Naive thymus-derived CD4-positive, alpha-beta T cell (primary cell): ENCODE measurements at regions of chr14 and their contacts with region 1.

Region 1: DNA sequence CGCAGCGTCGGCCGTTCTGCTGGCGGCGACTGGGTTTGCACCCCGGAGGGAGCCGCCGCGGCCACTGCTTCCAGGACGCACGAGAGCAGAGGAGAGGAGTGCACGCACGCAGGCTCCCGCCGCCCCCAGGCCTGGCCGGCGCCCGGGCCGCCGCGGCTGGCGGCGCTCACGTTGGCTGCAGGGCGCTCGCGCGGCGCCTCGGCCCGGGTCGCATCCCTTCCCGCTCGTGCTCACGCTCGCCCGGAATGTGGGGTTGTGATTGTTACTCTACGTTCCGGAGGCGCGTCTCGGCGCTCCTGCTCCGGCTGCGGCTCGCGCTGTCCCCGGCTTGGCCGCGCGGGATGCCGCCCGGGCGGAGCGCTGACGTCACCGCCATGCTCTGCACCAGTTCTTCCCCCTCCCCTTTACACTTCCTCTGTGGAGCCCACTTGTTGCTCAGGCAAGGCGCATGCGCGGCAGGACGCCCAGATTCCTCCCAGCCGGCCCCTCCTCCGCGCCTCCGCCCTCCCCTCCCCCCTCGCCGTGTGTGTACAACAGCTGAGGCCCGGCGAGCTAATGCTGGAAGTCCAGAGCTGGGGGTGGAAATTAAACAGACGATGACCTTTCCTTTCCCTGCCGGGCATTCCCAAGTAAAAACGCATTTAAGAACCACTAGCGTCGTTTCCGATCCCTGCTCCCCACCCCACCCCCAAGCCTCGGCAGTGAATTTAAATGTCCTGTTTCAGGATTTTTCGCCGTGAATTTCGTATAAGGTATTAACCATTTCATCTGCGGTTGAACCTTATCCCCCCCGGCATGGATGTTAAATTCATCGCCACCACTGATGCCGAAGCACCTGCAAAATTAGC is at the start of gene IRF2BPL:
- DNase-seq: peak; percentile 90 to 96 (median 94)
- ATAC-seq: peak; percentile 82
- H3K4me3 ChIP-seq: peak within 1 kb of the TSS; percentile 81
- H3K4me3 Mint-ChIP-seq: peak within 1 kb of the TSS; percentile 93 to 99 (median 98)
- H3K27ac ChIP-seq: peak within 1 kb of the TSS; percentile 98
- H3K27ac Mint-ChIP-seq: peak within 1 kb of the TSS; percentile 97 to 100 (median 99)
- H3K4me1 ChIP-seq: peaks cover 43 to 57% of the 10 kb centered on the region in 2 donors
- H3K4me1 Mint-ChIP-seq: peaks cover 33 to 65% (median 58%) of the 10 kb centered on the region in 7 donors
- H3K27me3 ChIP-seq: no peaks in the 10 kb centered on the region
- H3K27me3 Mint-ChIP-seq: no peaks in the 10 kb centered on the region
- total RNA-seq, gene IRF2BPL: 30.2 to 45.2 (median 34.6) TPM

Region 2: GRCh38 chr14:76910371-76910890 is 118.2 kb before region 1 on chr14:
- CTCF ChIA-PET with region 1: interaction called, 12 read pairs
- POLR2A ChIA-PET with region 1: interaction called, 19 read pairs
- intact Hi-C with region 1: loop called in 1 of 2 experiments (anchors 1 kb)
- DNase-seq: no peak
- ATAC-seq: no peak
- H3K4me3 ChIP-seq: no peak overlapping the region
- H3K4me3 Mint-ChIP-seq: no peak overlapping the region
- H3K27ac ChIP-seq: no peak overlapping the region
- H3K27ac Mint-ChIP-seq: peak overlapping the region in 2 of 9 donors; percentile 32 to 58
- H3K4me1 ChIP-seq: peaks cover 7 to 22% of the 10 kb centered on the region in 2 donors
- H3K4me1 Mint-ChIP-seq: peaks cover 7 to 52% (median 20%) of the 10 kb centered on the region in 7 donors
- H3K27me3 ChIP-seq: no peaks in the 10 kb centered on the region
- H3K27me3 Mint-ChIP-seq: no peaks in the 10 kb centered on the region

Region 3: GRCh38 chr14:76926521-76927251 is 101.9 kb before region 1 on chr14:
- CTCF ChIA-PET with region 1: interaction called, 3 read pairs
- POLR2A ChIA-PET with region 1: interaction called, 8 read pairs
- intact Hi-C with region 1: loop called in 1 of 2 experiments (anchors 1 kb)
- DNase-seq: peak in 8 of 9 donors; percentile 50 to 90 (median 69)
- ATAC-seq: peak; percentile 73
- H3K4me3 ChIP-seq: peak overlapping the region; percentile 6
- H3K4me3 Mint-ChIP-seq: peak overlapping the region; percentile 65 to 88 (median 80)
- H3K27ac ChIP-seq: peak overlapping the region; percentile 65
- H3K27ac Mint-ChIP-seq: peak overlapping the region; percentile 56 to 96 (median 90)
- H3K4me1 ChIP-seq: peaks cover 52 to 72% of the 10 kb centered on the region in 2 donors
- H3K4me1 Mint-ChIP-seq: peaks cover 50 to 96% (median 86%) of the 10 kb centered on the region in 7 donors
- H3K27me3 ChIP-seq: no peaks in the 10 kb centered on the region
- H3K27me3 Mint-ChIP-seq: no peaks in the 10 kb centered on the region

Region 4: GRCh38 chr14:76956316-76957090 is 72.1 kb before region 1 on chr14:
- CTCF ChIA-PET with region 1: interaction called, 17 read pairs
- POLR2A ChIA-PET with region 1: interaction called, 73 read pairs
- intact Hi-C with region 1: loop called (anchors 1 kb)
- DNase-seq: peak; percentile 70 to 90 (median 78)
- ATAC-seq: peak; percentile 82
- H3K4me3 ChIP-seq: peak overlapping the region; percentile 74
- H3K4me3 Mint-ChIP-seq: peak overlapping the region; percentile 82 to 97 (median 93)
- H3K27ac ChIP-seq: peak overlapping the region; percentile 87
- H3K27ac Mint-ChIP-seq: peak overlapping the region; percentile 88 to 99 (median 98)
- H3K4me1 ChIP-seq: peaks cover 38 to 49% of the 10 kb centered on the region in 2 donors
- H3K4me1 Mint-ChIP-seq: peaks cover 24 to 77% (median 71%) of the 10 kb centered on the region in 7 donors
- H3K27me3 ChIP-seq: no peaks in the 10 kb centered on the region
- H3K27me3 Mint-ChIP-seq: no peaks in the 10 kb centered on the region

Region 5: GRCh38 chr14:76977793-76978720 is 50.6 kb before region 1 on chr14:
- CTCF ChIA-PET with region 1: no interaction called
- POLR2A ChIA-PET with region 1: no interaction called
- intact Hi-C with region 1: loop called in 1 of 2 experiments (anchors 1 kb)
- DNase-seq: peak; percentile 40 to 90 (median 65)
- ATAC-seq: peak; percentile 97
- H3K4me3 ChIP-seq: no peak overlapping the region
- H3K4me3 Mint-ChIP-seq: peak overlapping the region in 7 of 10 donors; percentile 1 to 57 (median 35)
- H3K27ac ChIP-seq: peak overlapping the region; percentile 50
- H3K27ac Mint-ChIP-seq: peak overlapping the region; percentile 29 to 88 (median 82)
- H3K4me1 ChIP-seq: peaks cover 12 to 15% of the 10 kb centered on the region in 2 donors
- H3K4me1 Mint-ChIP-seq: peaks cover 0 to 25% (median 16%) of the 10 kb centered on the region in 7 donors
- H3K27me3 ChIP-seq: no peaks in the 10 kb centered on the region
- H3K27me3 Mint-ChIP-seq: no peaks in the 10 kb centered on the region

Region 6: GRCh38 chr14:77040059-77040740 is 11.6 kb after region 1 on chr14:
- CTCF ChIA-PET with region 1: interaction called, 61 read pairs
- POLR2A ChIA-PET with region 1: interaction called, 240 read pairs
- intact Hi-C with region 1: loop called (anchors 1 kb)
- DNase-seq: peak; percentile 86 to 99 (median 99)
- ATAC-seq: peak; percentile 87
- H3K4me3 ChIP-seq: peak overlapping the region; percentile 78
- H3K4me3 Mint-ChIP-seq: peak overlapping the region; percentile 76 to 97 (median 87)
- H3K27ac ChIP-seq: peak overlapping the region; percentile 97
- H3K27ac Mint-ChIP-seq: peak overlapping the region; percentile 97 to 100 (median 99)
- H3K4me1 ChIP-seq: peaks cover 57 to 77% of the 10 kb centered on the region in 2 donors
- H3K4me1 Mint-ChIP-seq: peaks cover 50 to 97% (median 89%) of the 10 kb centered on the region in 7 donors
- H3K27me3 ChIP-seq: no peaks in the 10 kb centered on the region
- H3K27me3 Mint-ChIP-seq: no peaks in the 10 kb centered on the region